Naive thymus-derived CD4-positive, alpha-beta T cell (primary cell): ENCODE measurements at regions of chr2 and their contacts with region 1.

Region 1: DNA sequence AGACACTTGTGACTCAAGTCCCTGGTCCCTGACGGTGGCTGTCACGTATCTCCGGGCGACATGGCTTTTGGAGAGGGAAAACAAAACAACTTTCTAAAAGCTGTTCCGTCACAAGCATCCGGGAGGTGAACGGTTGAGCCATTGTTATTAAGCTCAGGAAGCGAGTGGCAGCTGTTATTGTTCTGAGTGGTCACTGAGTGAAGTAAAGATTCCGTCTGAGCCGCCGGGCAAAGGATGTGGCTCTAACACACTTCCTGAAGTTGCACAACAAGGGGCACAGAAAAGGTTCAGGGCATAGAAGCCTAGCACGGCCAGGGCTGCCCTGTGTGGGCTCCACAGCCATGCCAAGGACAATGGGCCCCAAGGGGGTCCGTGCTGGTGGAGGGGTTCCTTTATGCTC is 24.3 kb downstream of the INPP5D start:
- DNase-seq: peak in 7 of 9 donors; percentile 32 to 66 (median 55)
- ATAC-seq: peak; percentile 64
- H3K4me3 ChIP-seq: peak overlapping the region; percentile 27
- H3K4me3 Mint-ChIP-seq: peak overlapping the region; percentile 79 to 86 (median 82)
- H3K27ac ChIP-seq: peak overlapping the region; percentile 57
- H3K27ac Mint-ChIP-seq: peak overlapping the region in 8 of 9 donors; percentile 88 to 98 (median 93)
- H3K4me1 ChIP-seq: peaks cover 64 to 82% of the 10 kb centered on the region in 2 donors
- H3K4me1 Mint-ChIP-seq: peaks cover 74 to 93% (median 88%) of the 10 kb centered on the region in 7 donors
- H3K27me3 ChIP-seq: no peaks in the 10 kb centered on the region
- H3K27me3 Mint-ChIP-seq: no peaks in the 10 kb centered on the region

Region 2: DNA sequence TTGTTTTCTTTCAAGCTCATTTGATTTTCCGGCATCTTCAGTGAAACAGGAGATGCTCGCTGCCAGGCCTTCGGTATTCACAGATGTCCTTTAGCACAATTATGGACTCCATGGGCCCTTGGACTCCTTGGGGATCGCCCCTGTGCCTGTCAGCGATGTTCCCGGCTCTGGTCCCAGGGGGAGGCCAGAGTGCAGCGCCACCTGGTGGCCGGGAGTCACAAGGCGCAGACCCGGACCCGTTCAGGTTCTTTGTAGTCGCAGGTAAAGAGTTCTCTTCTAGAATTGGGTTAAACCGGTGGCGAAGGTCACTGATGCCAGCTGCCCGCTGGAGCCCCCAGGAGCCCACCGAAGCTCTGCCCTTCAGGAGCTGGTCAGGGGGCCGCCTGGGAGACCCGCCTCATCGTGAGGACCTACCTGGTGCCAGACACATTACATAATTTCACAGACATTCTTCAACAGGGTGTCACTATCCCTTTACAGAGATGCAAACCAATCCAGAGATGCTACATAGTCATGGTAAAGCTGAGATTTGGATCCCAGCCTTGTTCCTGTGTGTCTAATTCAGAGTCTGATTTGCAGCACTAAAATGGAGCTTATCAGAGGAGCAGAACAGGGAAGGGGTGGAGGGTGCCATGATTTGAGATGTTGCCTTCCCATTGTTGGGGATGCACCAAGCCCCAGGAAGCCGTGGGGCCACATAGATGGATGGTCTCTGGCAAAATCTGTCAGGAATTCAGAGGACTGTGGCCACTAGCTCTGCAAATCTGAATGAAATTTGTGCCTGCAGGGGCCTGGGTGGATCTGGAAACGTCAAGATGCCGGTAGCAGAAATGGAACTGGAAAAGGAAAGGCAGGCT is 30.3 kb before region 1 on chr2:
- CTCF ChIA-PET with region 1: interaction called, 10 read pairs
- POLR2A ChIA-PET with region 1: interaction called, 144 read pairs
- intact Hi-C with region 1: no loop called
- DNase-seq: peak in 7 of 9 donors; percentile 43 to 79 (median 57)
- ATAC-seq: peak; percentile 80
- H3K4me3 ChIP-seq: no peak overlapping the region
- H3K4me3 Mint-ChIP-seq: peak overlapping the region in 3 of 10 donors; percentile 10 to 56 (median 15)
- H3K27ac ChIP-seq: no peak overlapping the region
- H3K27ac Mint-ChIP-seq: peak overlapping the region in 2 of 9 donors; percentile 27 to 57
- H3K4me1 ChIP-seq: peaks cover 8 to 13% of the 10 kb centered on the region in 2 donors
- H3K4me1 Mint-ChIP-seq: peaks cover 8 to 28% (median 19%) of the 10 kb centered on the region in 7 donors
- H3K27me3 ChIP-seq: no peaks in the 10 kb centered on the region
- H3K27me3 Mint-ChIP-seq: peaks cover 0 to 35% (median 0%) of the 10 kb centered on the region in 5 donors

Region 3: DNA sequence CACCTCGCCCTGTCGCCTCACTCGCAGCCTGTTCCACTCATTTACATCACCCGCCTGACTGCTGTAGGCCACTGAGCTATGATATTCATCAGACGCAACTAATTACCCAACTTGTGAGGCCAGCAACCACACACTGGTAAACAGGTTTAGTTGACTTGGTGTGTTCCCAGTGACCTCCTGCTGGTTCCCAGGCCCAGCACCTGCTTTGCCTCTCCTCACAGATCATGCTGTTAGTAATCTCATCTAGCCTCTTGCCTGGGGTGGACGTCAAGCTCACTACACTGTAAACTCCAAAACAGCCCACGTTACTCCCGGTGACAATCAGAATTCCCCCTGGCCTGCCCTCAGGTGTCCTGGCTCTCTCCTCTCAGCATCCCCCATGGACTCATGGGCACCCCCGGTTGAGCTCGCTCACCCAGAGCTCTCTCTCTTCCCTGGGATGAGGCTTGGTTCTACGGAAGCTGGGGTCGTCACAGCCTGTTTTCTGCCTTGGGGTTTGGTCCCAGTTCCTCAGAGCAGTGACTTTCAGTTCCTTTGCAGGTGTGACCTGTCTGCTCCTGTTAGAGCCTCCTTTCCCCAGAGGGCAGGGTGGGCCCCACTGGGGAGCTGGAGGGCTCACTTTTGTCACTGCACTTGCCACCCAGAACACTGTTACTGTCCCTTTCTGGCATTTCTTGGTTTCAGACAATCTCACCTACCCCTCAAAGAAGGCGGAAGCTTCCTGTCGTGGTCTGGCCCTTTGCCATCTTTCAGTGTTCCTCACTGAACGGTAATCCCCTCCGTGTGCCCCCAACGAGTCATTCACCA is 15.9 kb after region 1 on chr2:
- CTCF ChIA-PET with region 1: no interaction called
- POLR2A ChIA-PET with region 1: interaction called, 5 read pairs
- intact Hi-C with region 1: loop called (anchors 2 kb)
- DNase-seq: peak in 7 of 9 donors; percentile 32 to 57 (median 45)
- ATAC-seq: peak; percentile 73
- H3K4me3 ChIP-seq: peak overlapping the region; percentile 15
- H3K4me3 Mint-ChIP-seq: peak overlapping the region; percentile 59 to 83 (median 72)
- H3K27ac ChIP-seq: no peak overlapping the region
- H3K27ac Mint-ChIP-seq: peak overlapping the region; percentile 12 to 88 (median 76)
- H3K4me1 ChIP-seq: peaks cover 31 to 48% of the 10 kb centered on the region in 2 donors
- H3K4me1 Mint-ChIP-seq: peaks cover 55 to 86% (median 78%) of the 10 kb centered on the region in 7 donors
- H3K27me3 ChIP-seq: no peaks in the 10 kb centered on the region
- H3K27me3 Mint-ChIP-seq: no peaks in the 10 kb centered on the region

Region 4: DNA sequence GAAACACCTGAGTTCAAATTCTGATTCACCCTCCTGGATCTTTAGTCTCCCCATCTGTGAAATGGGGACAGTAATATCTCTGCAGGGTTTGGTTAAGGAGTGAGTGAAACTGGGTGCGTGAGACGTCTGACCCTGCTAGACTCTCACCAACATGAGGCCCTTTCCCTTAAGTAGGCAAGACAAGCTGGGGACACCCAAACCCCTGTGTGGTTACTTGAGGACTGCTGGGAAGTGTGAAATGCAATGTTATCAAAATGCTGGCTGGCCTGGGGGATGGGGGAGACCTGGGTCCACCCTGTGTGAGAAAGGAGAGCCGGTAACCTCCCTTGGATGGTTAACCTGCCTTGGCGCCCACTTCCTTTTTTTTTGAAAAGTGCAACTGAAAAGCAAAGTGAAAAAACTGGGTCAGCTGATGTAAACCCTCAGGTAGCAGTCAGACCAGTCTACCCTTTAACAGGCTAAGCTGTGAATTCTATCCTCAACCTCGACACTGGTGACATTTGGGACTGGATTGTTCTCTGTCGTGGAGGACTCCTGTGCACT is 57.9 kb after region 1 on chr2:
- CTCF ChIA-PET with region 1: no interaction called
- POLR2A ChIA-PET with region 1: no interaction called
- intact Hi-C with region 1: loop called in 1 of 2 experiments (anchors 5 kb)
- DNase-seq: peak in 1 of 9 donors; percentile 11
- ATAC-seq: peak; percentile 72
- H3K4me3 ChIP-seq: no peak overlapping the region
- H3K4me3 Mint-ChIP-seq: peak overlapping the region in 5 of 10 donors; percentile 21 to 65 (median 30)
- H3K27ac ChIP-seq: peak overlapping the region; percentile 1
- H3K27ac Mint-ChIP-seq: peak overlapping the region; percentile 75 to 90 (median 80)
- H3K4me1 ChIP-seq: peaks cover 8 to 19% of the 10 kb centered on the region in 2 donors
- H3K4me1 Mint-ChIP-seq: peaks cover 30 to 48% (median 38%) of the 10 kb centered on the region in 7 donors
- H3K27me3 ChIP-seq: no peaks in the 10 kb centered on the region
- H3K27me3 Mint-ChIP-seq: no peaks in the 10 kb centered on the region

Region 5: GRCh38 chr2:233418761-233419625 is 334.5 kb after region 1 on chr2:
- CTCF ChIA-PET with region 1: no interaction called
- POLR2A ChIA-PET with region 1: no interaction called
- intact Hi-C with region 1: loop called (anchors 10 kb)
- DNase-seq: peak in 6 of 9 donors; percentile 40 to 69 (median 50)
- ATAC-seq: peak; percentile 74
- H3K4me3 ChIP-seq: peak overlapping the region; percentile 70
- H3K4me3 Mint-ChIP-seq: peak overlapping the region; percentile 84 to 99 (median 92)
- H3K27ac ChIP-seq: peak overlapping the region; percentile 80
- H3K27ac Mint-ChIP-seq: peak overlapping the region; percentile 86 to 99 (median 97)
- H3K4me1 ChIP-seq: peaks cover 65 to 93% of the 10 kb centered on the region in 2 donors
- H3K4me1 Mint-ChIP-seq: peaks cover 78 to 100% (median 96%) of the 10 kb centered on the region in 7 donors
- H3K27me3 ChIP-seq: no peaks in the 10 kb centered on the region
- H3K27me3 Mint-ChIP-seq: no peaks in the 10 kb centered on the region